CD4-positive, alpha-beta T cell (primary cell): ENCODE measurements at regions of chr11 and their contacts with region 1.

Region 1: GRCh38 chr11:125874556-125875124 is 12.8 kb upstream of the HYLS1 start:
- DNase-seq: peak in 9 of 14 experiments; percentile 7 to 70 (median 32)
- ATAC-seq: peak; percentile 44
- H3K4me3 ChIP-seq: no peak overlapping the region
- H3K4me3 Mint-ChIP-seq: no peak overlapping the region
- H3K27ac ChIP-seq: no peak overlapping the region
- H3K27ac Mint-ChIP-seq: no peak overlapping the region
- H3K4me1 ChIP-seq: no peaks in the 10 kb centered on the region
- H3K4me1 Mint-ChIP-seq: no peaks in the 10 kb centered on the region
- H3K27me3 ChIP-seq: no peaks in the 10 kb centered on the region
- H3K27me3 Mint-ChIP-seq: peaks cover 10% of the 10 kb centered on the region
- CTCF ChIP-seq: peak; percentile 76

Region 2: DNA sequence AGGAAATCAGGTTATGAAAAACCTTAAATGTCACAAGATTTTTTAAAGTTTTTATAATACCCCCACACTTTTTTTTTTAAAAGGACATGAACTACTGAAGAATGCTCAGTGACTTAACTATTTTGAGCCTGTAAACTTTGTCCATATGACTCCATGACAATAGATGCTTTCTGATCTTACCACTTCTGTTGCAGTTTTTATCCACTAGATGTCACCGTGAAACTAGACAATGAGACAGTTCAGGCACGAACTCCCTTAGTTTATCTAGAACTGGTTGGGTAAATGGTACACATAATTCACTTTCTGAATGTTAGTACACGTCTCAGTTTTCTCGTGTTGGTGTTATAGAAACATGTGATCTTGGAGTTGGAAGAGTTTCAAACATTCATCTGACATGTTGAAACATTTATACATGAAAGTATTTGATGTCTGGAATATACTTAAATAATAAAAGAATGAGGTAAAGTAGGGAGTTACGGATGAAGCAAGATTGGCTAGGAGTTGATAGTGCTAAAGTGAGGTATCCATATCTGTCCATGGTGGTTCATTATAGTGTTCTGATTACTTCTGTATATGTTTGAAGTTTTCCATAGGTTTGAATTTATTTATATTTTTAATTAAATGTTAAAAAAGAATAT is 912.5 kb before region 1 on chr11:
- CTCF ChIA-PET with region 1: no interaction called
- POLR2A ChIA-PET with region 1: no interaction called
- intact Hi-C with region 1: loop called in 1 of 2 experiments (anchors 5 kb)
- DNase-seq: peak in 4 of 14 experiments; percentile 16 to 82 (median 80)
- ATAC-seq: peak; percentile 98
- H3K4me3 ChIP-seq: no peak overlapping the region
- H3K4me3 Mint-ChIP-seq: no peak overlapping the region
- H3K27ac ChIP-seq: no peak overlapping the region
- H3K27ac Mint-ChIP-seq: no peak overlapping the region
- H3K4me1 ChIP-seq: no peaks in the 10 kb centered on the region
- H3K4me1 Mint-ChIP-seq: no peaks in the 10 kb centered on the region
- H3K27me3 ChIP-seq: no peaks in the 10 kb centered on the region
- H3K27me3 Mint-ChIP-seq: no peaks in the 10 kb centered on the region
- CTCF ChIP-seq: peak; percentile 82

Region 3: GRCh38 chr11:125423247-125423849 is 451.3 kb before region 1 on chr11:
- CTCF ChIA-PET with region 1: no interaction called
- POLR2A ChIA-PET with region 1: no interaction called
- intact Hi-C with region 1: loop called (anchors 2 to 5 kb)
- DNase-seq: peak in 3 of 14 experiments; percentile 22 to 25 (median 23)
- ATAC-seq: no peak
- H3K4me3 ChIP-seq: no peak overlapping the region
- H3K4me3 Mint-ChIP-seq: no peak overlapping the region
- H3K27ac ChIP-seq: no peak overlapping the region
- H3K27ac Mint-ChIP-seq: no peak overlapping the region
- H3K4me1 ChIP-seq: no peaks in the 10 kb centered on the region
- H3K4me1 Mint-ChIP-seq: no peaks in the 10 kb centered on the region
- H3K27me3 ChIP-seq: peaks cover 5 to 7% of the 10 kb centered on the region in 2 experiments
- H3K27me3 Mint-ChIP-seq: peaks cover 23% of the 10 kb centered on the region
- CTCF ChIP-seq: peak; percentile 39

Region 4: DNA sequence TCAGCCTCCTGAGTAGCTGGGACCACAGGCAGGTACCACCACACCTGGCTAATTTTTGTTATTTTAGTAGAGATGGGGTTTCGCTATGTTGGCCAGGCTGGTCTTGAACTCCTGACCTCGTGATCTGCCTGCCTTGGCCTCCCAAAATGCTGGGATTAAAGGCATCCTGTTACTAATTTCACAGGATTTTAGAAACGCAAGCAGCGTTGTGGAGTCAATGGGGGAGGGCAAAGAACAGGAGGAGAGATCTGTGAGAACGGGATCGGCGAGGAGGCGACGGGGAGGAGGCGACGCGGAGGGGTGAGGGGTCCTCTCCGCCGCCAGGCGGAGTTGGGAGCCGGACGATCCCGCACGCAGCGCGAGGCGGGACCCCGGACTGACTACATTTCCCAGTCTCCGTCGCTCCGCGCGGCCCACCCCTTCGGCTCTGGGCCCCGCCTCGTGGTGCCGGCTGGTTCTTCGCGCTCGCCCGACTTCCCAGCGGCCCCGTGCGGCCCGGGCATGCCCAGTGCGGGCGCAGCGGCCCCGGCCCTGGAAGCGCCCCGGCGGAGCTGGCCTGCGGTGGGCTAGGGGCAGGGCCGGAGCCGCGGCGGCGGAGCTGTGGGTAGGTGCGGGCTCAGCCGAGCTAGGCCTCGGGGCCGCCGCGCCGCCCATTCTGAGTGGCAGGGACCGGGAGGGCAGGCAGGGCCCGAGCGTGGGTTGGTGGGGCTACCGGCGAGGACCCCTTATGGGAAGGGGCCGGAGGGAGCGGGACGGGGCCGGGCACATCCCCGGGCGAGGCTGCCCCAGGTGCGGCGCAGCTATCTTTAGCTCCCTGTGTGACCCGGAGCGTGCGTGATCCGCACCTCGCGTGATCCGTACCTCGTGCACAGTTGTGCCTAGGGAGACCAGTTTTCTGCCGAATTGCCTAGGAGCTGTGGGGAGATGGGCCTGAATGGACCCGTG is 305.4 kb before region 1 on chr11 and contains the start of gene EI24:
- CTCF ChIA-PET with region 1: no interaction called
- POLR2A ChIA-PET with region 1: no interaction called
- intact Hi-C with region 1: loop called in 1 of 2 experiments (anchors 5 kb)
- DNase-seq: peak; percentile 76 to 95 (median 86)
- ATAC-seq: peak; percentile 94
- H3K4me3 ChIP-seq: peak within 1 kb of the TSS; percentile 80
- H3K4me3 Mint-ChIP-seq: peak within 1 kb of the TSS; percentile 95
- H3K27ac ChIP-seq: peak within 1 kb of the TSS; percentile 68 to 74
- H3K27ac Mint-ChIP-seq: peak within 1 kb of the TSS; percentile 84
- H3K4me1 ChIP-seq: peaks cover 18% of the 10 kb centered on the region
- H3K4me1 Mint-ChIP-seq: peaks cover 26% of the 10 kb centered on the region
- H3K27me3 ChIP-seq: no peaks in the 10 kb centered on the region
- H3K27me3 Mint-ChIP-seq: no peaks in the 10 kb centered on the region
- CTCF ChIP-seq: peak; percentile 76
- total RNA-seq, gene EI24: 21.0 to 22.8 TPM

Region 5: DNA sequence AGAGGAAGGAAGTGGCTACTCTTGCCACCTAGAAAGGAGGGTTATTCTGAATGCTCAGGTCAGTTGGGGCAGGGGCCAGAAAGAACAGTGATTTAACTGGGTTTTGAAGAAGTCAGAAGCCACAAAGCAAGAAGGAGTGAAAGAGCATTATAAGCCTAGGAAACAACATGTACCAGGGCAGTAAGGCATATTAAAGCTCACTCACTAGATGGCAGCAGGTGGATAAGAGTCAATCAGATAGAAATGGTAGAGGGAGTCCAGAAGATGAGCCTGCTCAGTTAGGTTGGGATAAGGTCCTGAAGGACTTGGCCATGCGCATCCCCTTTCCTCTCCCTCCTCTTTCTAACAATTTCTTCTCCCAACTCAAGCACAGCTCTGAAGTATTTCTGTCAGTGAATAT is 150.5 kb before region 1 on chr11:
- CTCF ChIA-PET with region 1: no interaction called
- POLR2A ChIA-PET with region 1: no interaction called
- intact Hi-C with region 1: loop called (anchors 5 to 10 kb)
- DNase-seq: peak in 1 of 14 experiments; percentile 6
- ATAC-seq: no peak
- H3K4me3 ChIP-seq: no peak overlapping the region
- H3K4me3 Mint-ChIP-seq: no peak overlapping the region
- H3K27ac ChIP-seq: no peak overlapping the region
- H3K27ac Mint-ChIP-seq: no peak overlapping the region
- H3K4me1 ChIP-seq: no peaks in the 10 kb centered on the region
- H3K4me1 Mint-ChIP-seq: no peaks in the 10 kb centered on the region
- H3K27me3 ChIP-seq: peaks cover 9 to 13% of the 10 kb centered on the region in 2 experiments
- H3K27me3 Mint-ChIP-seq: peaks cover 59% of the 10 kb centered on the region
- CTCF ChIP-seq: no peak

Region 6: GRCh38 chr11:126328444-126328843 is 453.8 kb after region 1 on chr11:
- CTCF ChIA-PET with region 1: no interaction called
- POLR2A ChIA-PET with region 1: no interaction called
- intact Hi-C with region 1: no loop called
- DNase-seq: no peak
- ATAC-seq: no peak
- H3K4me3 ChIP-seq: no peak overlapping the region
- H3K4me3 Mint-ChIP-seq: no peak overlapping the region
- H3K27ac ChIP-seq: no peak overlapping the region
- H3K27ac Mint-ChIP-seq: no peak overlapping the region
- H3K4me1 ChIP-seq: no peaks in the 10 kb centered on the region
- H3K4me1 Mint-ChIP-seq: peaks cover 18% of the 10 kb centered on the region
- H3K27me3 ChIP-seq: no peaks in the 10 kb centered on the region
- H3K27me3 Mint-ChIP-seq: no peaks in the 10 kb centered on the region
- CTCF ChIP-seq: no peak